IMR-90 (cell line): ENCODE measurements at regions of chr15 and their contacts with region 1.

Region 1: GRCh38 chr15:101251830-101252820 is at the start of gene CHSY1:
- DNase-seq: peak; percentile 93
- ATAC-seq: peak; percentile 81
- H3K4me3 ChIP-seq: peak within 1 kb of the TSS; percentile 100
- H3K27ac ChIP-seq: peak within 1 kb of the TSS; percentile 95
- H3K4me1 ChIP-seq: peaks cover 21% of the 10 kb centered on the region
- H3K27me3 ChIP-seq: no peaks in the 10 kb centered on the region
- CTCF ChIP-seq: peak; percentile 39
- POLR2A ChIP-seq: peak; percentile 98
- RAD21 ChIP-seq: peak; percentile 35
- total RNA-seq, gene CHSY1: 53.2 and 55.3 TPM in 2 replicates

Region 2: DNA sequence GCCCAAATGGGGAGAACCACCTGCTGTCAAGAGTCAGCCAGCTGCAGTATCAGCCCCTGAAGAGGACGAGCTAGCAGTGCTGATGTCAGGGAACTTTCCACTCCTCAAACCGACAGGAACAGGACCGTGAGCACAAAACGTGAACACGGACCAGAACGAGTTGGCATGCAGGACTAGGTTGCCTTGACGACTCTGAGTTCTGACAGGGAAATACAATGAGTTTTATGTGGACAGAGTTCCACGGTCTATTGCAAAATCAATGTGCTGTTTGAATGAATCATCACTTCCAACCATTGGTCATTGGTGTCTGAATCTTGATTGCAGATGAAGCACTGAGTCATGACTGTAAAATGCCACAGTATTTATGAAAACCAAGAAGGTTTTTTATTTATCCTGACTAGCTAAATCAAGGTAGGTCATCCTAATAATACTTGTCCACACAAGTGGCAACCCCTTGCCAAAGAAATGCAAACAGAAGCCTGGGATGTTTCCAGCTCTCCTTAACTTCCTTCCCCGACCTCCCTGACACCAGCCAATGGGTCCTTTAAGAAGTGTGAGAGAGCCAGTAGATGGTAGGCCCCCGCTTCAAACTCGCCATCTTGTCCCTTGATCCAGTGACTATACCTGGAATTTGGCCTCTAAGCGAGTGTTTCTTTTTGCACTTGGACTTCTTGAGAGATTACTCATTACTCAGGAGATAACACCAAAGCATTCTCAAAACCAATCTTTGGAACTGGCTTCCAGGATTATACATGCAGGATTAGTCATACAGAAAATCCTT is 530.2 kb before region 1 on chr15:
- CTCF ChIA-PET with region 1: no interaction called
- POLR2A ChIA-PET with region 1: no interaction called
- dilution Hi-C with region 1: no loop called
- in situ Hi-C with region 1: loop called (anchors 25 kb)
- intact Hi-C with region 1: no loop called
- DNase-seq: peak; percentile 100
- ATAC-seq: peak; percentile 59
- H3K4me3 ChIP-seq: no peak overlapping the region
- H3K27ac ChIP-seq: peak overlapping the region; percentile 68
- H3K4me1 ChIP-seq: peaks cover 38% of the 10 kb centered on the region
- H3K27me3 ChIP-seq: no peaks in the 10 kb centered on the region
- CTCF ChIP-seq: no peak
- POLR2A ChIP-seq: no peak
- RAD21 ChIP-seq: 0 out of 2 replicates have a peak, but pooled peaks have one; percentile 23

Region 3: DNA sequence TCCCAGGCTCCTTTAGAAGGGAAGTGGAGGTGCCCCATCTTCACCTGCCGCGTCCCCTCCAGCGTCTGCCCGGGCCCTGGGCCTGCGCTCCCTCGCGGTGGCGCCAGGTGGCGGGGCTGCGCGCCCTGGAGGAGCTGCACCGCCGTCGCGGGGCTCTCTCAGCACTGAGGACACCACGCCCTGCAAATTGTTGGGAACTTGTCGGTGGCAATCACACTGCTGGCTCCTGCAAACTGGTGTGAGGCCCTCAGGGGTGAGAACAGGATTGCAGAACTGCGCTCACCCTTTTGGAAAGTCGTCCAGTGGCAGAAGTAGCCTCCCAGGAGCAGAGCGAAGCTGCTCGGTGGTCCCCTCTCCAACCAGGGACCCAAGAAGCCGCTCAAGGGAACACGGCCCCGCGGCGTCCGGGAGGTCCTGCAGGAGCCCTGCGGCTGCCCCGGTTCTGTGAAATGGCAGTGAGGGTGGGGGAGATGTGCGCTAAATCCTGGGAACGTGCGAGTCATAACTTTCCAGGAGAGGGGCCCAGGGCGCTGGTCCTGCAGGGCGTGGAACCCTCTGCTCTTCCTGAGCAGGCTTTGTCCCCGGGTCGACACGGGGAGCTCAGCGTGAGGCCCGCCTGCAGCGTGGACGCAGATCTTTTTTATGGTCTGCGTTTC is 334.0 kb before region 1 on chr15:
- CTCF ChIA-PET with region 1: no interaction called
- POLR2A ChIA-PET with region 1: no interaction called
- dilution Hi-C with region 1: no loop called
- in situ Hi-C with region 1: loop called (anchors 25 kb)
- intact Hi-C with region 1: loop called (anchors 5 kb)
- DNase-seq: peak; percentile 62
- ATAC-seq: peak; percentile 83
- H3K4me3 ChIP-seq: peak overlapping the region; percentile 60
- H3K27ac ChIP-seq: no peak overlapping the region; the same call in 1 of the 2 replicates
- H3K4me1 ChIP-seq: no peaks in the 10 kb centered on the region; the same call in 1 of the 2 replicates
- H3K27me3 ChIP-seq: no peaks in the 10 kb centered on the region
- CTCF ChIP-seq: peak; percentile 90
- POLR2A ChIP-seq: no peak
- RAD21 ChIP-seq: peak; percentile 85

Region 4: DNA sequence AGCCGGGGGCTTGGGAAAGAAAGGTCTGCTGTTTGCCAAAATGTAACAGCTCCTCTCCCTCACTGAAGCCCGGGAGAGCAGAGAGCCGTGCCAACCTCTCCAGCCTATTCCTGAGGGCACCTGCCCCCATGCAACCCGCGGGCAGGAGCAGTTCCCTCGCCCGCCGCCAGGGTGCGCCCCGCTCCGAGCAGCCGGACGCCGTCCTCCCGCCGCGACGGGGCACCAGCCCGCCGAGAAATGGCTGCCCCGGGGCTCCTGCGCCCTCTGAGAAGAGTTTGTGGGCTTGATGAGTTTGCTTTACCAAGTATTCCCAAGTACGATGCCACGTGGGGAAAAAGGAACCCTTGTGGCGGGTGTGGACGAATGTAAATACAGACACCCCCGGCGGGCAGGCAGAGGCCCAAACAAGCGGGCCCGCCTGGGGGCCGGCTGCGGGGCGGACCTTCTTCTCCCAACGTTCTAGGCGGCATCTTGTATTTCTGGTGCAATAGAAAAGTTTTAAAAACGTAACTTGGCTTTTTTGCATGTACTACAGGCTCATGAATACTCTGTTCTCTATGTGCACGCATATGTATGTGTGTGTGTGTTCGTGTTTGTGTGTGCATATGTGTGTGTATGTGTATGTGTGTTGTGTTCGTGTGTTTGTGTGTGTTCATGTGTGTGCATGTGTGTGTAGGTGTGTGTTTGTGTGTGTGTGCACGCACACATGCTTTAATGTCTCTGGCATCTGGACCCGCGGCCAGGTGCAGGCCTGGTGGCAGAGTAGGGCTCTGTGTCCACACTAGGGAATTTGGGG is 163.1 kb before region 1 on chr15:
- CTCF ChIA-PET with region 1: no interaction called
- POLR2A ChIA-PET with region 1: interaction called, 5 read pairs
- dilution Hi-C with region 1: no loop called
- in situ Hi-C with region 1: loop called (anchors 5 kb)
- intact Hi-C with region 1: loop called (anchors 2 kb)
- DNase-seq: no peak
- ATAC-seq: peak; percentile 93
- H3K4me3 ChIP-seq: no peak overlapping the region
- H3K27ac ChIP-seq: no peak overlapping the region
- H3K4me1 ChIP-seq: peaks cover 15% of the 10 kb centered on the region
- H3K27me3 ChIP-seq: no peaks in the 10 kb centered on the region
- CTCF ChIP-seq: peak; percentile 95
- POLR2A ChIP-seq: peak; percentile 40; the same call in 1 of the 2 replicates
- RAD21 ChIP-seq: peak; percentile 93

Region 5: DNA sequence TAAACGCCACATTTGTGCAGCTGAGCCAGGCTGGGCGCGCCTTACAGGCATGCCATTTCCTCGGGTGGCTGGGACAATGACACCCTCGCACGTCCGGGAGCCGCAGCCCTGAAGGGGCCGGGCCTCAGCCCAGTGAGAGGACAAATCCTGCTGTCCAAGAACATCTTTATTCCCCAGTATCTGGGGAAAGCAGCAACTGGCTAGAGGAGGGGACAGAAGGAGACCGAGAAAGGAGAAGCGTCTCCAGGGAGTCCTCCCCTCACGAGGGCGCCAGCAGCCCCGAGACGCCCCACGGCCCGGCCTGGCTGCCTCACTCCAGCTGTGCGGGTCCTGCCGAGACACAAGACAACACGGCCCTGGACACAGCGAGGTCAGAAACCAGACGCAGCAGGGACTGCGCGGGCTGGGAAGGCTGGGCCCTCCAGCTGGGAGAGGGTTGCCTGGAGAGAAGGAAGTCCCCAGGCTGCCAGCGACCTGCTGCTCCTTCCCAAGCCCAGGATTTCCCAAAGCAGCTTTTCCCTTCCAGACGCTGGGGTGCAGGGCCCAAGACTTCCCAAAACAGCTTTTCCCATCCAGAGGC is 130.5 kb before region 1 on chr15:
- CTCF ChIA-PET with region 1: interaction called, 3 read pairs
- POLR2A ChIA-PET with region 1: interaction called, 8 read pairs
- dilution Hi-C with region 1: no loop called
- in situ Hi-C with region 1: no loop called
- intact Hi-C with region 1: loop called (anchors 2 kb)
- DNase-seq: peak; percentile 74
- ATAC-seq: peak; percentile 84
- H3K4me3 ChIP-seq: peak overlapping the region; percentile 5; the same call in 1 of the 2 replicates
- H3K27ac ChIP-seq: peak overlapping the region; percentile 76
- H3K4me1 ChIP-seq: peaks cover 20% of the 10 kb centered on the region
- H3K27me3 ChIP-seq: no peaks in the 10 kb centered on the region
- CTCF ChIP-seq: peak; percentile 56
- POLR2A ChIP-seq: no peak; the same call in 1 of the 2 replicates
- RAD21 ChIP-seq: peak; percentile 64

Region 6: DNA sequence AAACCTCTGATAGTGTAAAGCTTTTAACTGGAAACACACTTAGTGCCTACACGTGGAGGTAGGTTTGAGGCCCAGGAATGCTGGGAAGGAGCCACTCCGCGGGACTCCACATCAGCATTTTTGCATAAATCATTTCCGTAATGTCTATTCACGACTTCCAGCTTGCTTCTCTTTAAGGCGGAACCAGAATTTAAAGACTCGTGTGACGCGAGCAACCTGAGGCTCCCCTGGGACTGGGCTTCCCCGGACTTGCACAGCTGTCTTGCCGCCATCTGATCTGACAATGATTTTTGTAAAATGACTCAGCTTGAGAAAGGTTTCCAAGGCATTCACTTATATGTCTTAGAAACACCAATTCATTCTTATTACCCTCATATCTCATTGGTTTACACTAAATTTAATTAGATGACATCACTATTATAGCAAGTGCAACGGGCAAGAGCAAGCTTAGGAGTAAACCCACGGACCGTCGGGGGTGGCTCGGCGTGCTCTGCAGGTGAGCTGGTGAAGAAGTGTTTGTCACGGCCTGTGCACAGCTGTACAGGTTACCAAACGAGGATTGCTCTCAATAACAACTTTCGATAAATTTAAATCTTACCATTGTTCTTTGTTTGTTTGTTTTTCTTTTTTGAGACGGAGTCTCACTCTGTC is 95.5 kb before region 1 on chr15:
- CTCF ChIA-PET with region 1: no interaction called
- POLR2A ChIA-PET with region 1: no interaction called
- dilution Hi-C with region 1: no loop called
- in situ Hi-C with region 1: no loop called
- intact Hi-C with region 1: no loop called
- DNase-seq: peak; percentile 56
- ATAC-seq: no peak
- H3K4me3 ChIP-seq: no peak overlapping the region
- H3K27ac ChIP-seq: no peak overlapping the region
- H3K4me1 ChIP-seq: peaks cover 5% of the 10 kb centered on the region
- H3K27me3 ChIP-seq: no peaks in the 10 kb centered on the region
- CTCF ChIP-seq: no peak
- POLR2A ChIP-seq: no peak
- RAD21 ChIP-seq: no peak

Region 7: GRCh38 chr15:101188637-101189408 is 63.3 kb before region 1 on chr15:
- CTCF ChIA-PET with region 1: no interaction called
- POLR2A ChIA-PET with region 1: no interaction called
- dilution Hi-C with region 1: no loop called
- in situ Hi-C with region 1: no loop called
- intact Hi-C with region 1: loop called (anchors 2 kb)
- DNase-seq: peak; percentile 91
- ATAC-seq: peak; percentile 47
- H3K4me3 ChIP-seq: peak overlapping the region; percentile 38
- H3K27ac ChIP-seq: peak overlapping the region; percentile 100
- H3K4me1 ChIP-seq: peaks cover 37% of the 10 kb centered on the region
- H3K27me3 ChIP-seq: no peaks in the 10 kb centered on the region
- CTCF ChIP-seq: no peak
- POLR2A ChIP-seq: peak; percentile 72
- RAD21 ChIP-seq: no peak; the same call in 1 of the 2 replicates

Region 8: DNA sequence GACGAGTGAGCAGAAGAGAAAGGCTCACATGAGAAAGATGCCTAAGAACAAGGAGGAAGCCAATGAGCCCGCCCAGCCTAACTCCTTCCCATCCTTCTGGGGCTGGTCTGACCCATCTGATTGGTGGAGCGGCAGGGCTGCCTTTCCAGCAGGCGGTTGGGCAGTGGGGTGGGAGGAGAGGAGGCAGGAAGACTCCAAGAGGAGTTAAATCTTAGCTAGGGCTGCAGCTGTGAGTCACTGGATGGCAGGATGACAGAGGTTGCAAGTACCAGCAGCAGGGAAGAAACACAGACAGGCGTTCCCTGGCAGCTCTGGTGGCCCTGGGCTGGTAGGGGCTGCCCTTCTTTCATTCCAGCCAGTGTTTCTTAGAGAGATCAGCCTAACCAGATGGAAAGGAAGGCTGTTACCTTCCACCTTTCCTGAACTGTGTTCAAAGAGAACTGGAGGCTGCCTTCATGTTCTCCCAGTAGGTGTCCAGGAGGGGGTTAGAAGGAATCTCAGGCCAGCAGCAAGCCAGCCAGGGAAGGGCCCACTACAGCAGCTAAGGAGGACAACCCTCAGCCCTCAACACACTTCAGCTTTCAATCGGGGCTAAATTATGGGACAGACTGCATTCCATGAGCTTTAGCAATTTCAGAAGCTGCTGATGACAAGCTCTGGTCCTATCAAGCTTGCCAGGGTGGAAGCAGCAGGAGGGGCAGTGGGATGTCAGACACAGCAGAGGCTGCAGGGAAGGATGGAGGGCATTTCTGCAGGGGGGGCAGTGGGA is 50.5 kb before region 1 on chr15:
- CTCF ChIA-PET with region 1: interaction called, 3 read pairs
- POLR2A ChIA-PET with region 1: interaction called, 3 read pairs
- dilution Hi-C with region 1: no loop called
- in situ Hi-C with region 1: loop called (anchors 5 kb)
- intact Hi-C with region 1: loop called (anchors 1 kb)
- DNase-seq: peak; percentile 99
- ATAC-seq: peak; percentile 93
- H3K4me3 ChIP-seq: no peak overlapping the region
- H3K27ac ChIP-seq: peak overlapping the region; percentile 83
- H3K4me1 ChIP-seq: peaks cover 36% of the 10 kb centered on the region
- H3K27me3 ChIP-seq: no peaks in the 10 kb centered on the region
- CTCF ChIP-seq: no peak
- POLR2A ChIP-seq: peak; percentile 61; the same call in 1 of the 2 replicates
- RAD21 ChIP-seq: no peak